MCF 10A (cell line): ENCODE measurements at regions of chr19 and their contacts with region 1.

Region 1: DNA sequence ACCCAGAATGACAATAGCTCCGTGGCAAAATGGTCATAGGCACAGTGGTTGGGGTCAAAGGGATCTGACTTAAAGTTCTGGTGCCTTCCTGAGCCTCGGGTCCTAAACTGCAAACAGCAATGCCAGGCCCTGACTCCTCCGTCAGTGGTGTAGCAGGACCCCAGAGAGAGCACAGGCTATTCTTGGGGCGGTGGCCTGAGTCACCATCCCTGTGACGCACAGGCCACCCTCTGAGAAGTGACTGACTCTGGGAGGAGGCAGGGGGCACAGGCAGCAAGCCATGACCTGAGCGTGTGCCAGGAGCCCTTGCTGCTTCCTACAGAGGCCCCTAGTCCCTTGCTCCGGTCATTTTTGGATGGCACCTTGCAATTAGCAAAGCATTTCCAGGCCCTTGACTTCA is 18.7 kb downstream of the PLVAP start:
- DNase-seq: peak; percentile 93
- H3K4me3 Mint-ChIP-seq: no peak overlapping the region
- H3K27ac Mint-ChIP-seq: peak overlapping the region; percentile 43
- H3K4me1 Mint-ChIP-seq: peaks cover 18% of the 10 kb centered on the region
- H3K27me3 Mint-ChIP-seq: no peaks in the 10 kb centered on the region
- CTCF ChIP-seq: no peak

Region 2: DNA sequence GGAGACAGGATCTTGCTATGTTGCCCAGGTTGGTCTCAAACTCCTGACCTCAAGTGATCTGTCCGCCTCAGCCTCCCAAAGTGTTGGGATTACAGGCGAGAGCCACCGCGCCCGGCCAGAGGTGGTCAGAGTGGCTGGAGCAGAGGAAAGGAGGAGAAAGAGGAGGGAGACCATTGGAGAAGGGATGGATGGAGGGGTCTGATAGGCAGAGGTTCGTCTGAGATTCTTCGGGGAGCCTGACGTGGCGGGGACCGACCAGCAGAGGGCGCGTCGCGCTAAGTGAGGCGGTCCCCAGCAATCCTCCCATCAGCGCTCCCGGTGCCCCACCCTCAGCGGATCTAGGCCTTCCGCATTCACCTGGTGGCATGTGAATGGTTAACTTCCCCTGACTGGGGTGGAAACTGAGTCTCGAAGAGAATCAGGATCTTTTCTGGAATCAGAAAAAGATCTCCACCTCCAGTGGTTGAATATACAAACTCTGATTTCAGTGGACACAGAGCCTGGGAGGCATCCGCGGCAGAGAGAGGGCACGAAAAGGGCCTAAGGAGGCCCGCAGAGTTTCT is 12.2 kb before region 1 on chr19:
- CTCF ChIA-PET with region 1: interaction called, 11 read pairs
- POLR2A ChIA-PET with region 1: no interaction called
- intact Hi-C with region 1: no loop called
- DNase-seq: peak; percentile 79
- H3K4me3 Mint-ChIP-seq: no peak overlapping the region
- H3K27ac Mint-ChIP-seq: no peak overlapping the region
- H3K4me1 Mint-ChIP-seq: peaks cover 15% of the 10 kb centered on the region
- H3K27me3 Mint-ChIP-seq: no peaks in the 10 kb centered on the region
- CTCF ChIP-seq: peak; percentile 90

Region 3: DNA sequence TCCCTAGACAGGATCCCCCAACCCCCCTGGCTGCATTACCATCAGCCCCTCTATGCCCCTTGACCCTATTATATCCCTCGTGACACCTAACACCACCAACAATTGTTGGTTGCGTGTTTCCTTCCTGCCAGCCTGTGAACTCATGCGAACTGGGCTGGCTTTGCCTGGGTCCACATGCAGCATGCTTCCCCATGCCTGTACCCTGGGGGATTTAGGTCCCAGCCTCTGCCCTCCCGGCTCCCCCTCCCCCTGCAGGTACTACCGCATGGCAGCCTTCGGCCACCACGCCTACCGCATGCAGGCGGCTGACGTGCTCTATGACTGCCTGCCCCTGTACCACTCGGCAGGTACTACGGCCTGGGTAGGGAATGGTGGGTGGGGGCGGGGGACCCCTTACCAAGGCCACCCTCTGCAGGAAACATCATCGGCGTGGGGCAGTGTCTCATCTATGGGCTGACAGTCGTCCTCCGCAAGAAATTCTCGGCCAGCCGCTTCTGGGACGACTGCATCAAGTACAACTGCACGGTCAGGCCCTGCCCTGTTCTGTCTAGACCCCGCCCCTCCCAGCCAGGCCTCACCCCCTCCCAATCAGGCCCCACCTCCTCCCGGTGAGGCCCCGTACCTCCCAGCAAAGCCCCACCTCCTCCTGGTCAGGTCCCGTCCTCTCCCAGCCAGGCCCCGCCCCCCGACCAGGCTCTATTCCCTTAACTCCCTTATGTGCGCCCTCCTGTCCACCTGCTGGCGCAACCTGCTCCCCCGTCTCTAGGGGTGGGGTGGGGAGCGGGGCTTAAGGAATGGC is 130.4 kb after region 1 on chr19:
- CTCF ChIA-PET with region 1: no interaction called
- POLR2A ChIA-PET with region 1: no interaction called
- intact Hi-C with region 1: no loop called
- DNase-seq: peak; percentile 67
- H3K4me3 Mint-ChIP-seq: no peak overlapping the region
- H3K27ac Mint-ChIP-seq: no peak overlapping the region
- H3K4me1 Mint-ChIP-seq: peaks cover 11% of the 10 kb centered on the region
- H3K27me3 Mint-ChIP-seq: no peaks in the 10 kb centered on the region
- CTCF ChIP-seq: no peak